ENCODE measurements at regions of chr20 and their contacts with region 1.

Region 1: GRCh38 chr20:43408848-43409576 is 48.7 kb upstream of the SRSF6 start:
- DNase-seq: no peak
- H3K4me3 ChIP-seq: no peak overlapping the region
- H3K27me3 ChIP-seq: no peaks in the 10 kb centered on the region
- CTCF ChIP-seq: peak; percentile 80

Region 2: DNA sequence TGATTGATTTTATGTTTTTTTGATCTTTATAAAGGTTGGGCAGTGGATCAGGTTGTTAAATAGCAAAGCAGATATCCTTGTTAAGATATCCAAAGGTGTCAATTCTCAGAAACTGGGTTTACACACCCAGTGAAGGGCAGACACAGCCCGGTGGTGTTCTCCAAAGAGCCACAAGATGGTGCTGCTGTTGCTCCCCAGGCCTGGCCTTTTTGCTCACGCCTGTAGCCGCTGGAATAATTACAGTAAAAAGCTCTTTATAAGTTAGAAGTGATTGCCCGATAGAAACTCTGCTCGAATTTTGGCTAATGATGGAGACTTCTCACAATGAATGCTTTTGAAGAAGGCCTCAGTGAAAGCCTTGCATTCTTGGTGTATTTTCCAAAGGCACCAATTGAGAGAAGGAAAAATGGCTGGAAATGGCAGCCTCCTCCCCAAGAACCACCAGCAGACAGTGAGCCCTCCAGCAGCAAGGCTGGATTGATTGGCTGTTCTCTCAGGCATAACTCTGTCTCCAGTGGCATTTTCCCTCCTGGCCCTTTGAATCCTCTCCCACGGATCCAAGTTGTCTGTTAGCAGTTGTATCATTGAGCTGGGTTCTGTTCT is 1670.3 kb before region 1 on chr20:
- CTCF ChIA-PET with region 1: interaction called, 29 read pairs
- POLR2A ChIA-PET with region 1: no interaction called
- DNase-seq: no peak
- H3K4me3 ChIP-seq: no peak overlapping the region
- H3K27me3 ChIP-seq: peaks cover 2% of the 10 kb centered on the region; the same call in 1 of the 2 replicates
- CTCF ChIP-seq: peak; percentile 93

Region 3: GRCh38 chr20:43187476-43188233 is 221.4 kb before region 1 on chr20:
- CTCF ChIA-PET with region 1: interaction called, 16 read pairs
- POLR2A ChIA-PET with region 1: no interaction called
- DNase-seq: peak; percentile 5
- H3K4me3 ChIP-seq: no peak overlapping the region
- H3K27me3 ChIP-seq: peaks cover 15% of the 10 kb centered on the region
- CTCF ChIP-seq: peak; percentile 93

Region 4: DNA sequence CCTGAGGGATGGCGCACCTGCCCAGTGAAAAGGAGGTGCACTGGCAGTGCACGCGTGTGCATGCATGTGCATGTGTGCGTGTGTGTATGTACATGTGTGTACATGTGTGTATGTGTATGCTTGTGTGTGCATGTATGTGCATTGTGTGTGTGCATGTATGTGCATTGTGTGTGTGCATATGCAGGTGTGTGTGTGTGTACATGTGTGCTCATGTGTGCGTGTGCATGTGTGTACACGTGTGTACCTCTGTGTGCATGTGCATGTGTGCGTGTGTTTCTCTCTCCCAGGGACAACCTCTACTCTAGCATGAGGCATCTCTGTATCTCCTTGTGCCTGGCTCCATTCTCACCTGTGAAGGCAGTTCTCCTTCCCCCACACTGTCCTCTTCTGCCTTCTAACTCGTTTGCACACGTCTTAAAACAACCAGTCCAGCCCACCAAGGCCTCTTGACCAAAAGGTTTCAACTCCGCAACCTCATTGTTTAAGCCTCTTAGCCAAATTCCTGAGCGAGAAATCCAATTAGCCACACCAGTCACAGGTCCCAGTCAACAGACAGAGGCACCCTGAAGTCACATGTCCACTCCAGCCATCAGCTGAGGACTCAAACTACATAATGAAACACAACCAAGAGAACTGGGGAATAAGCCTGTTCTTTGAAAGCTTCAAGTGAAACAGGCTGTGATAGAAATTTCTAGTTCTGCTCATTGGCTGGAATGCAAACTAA is 115.8 kb before region 1 on chr20:
- CTCF ChIA-PET with region 1: no interaction called
- POLR2A ChIA-PET with region 1: no interaction called
- DNase-seq: no peak
- H3K4me3 ChIP-seq: no peak overlapping the region
- H3K27me3 ChIP-seq: no peaks in the 10 kb centered on the region
- CTCF ChIP-seq: no peak

Region 5: GRCh38 chr20:43397147-43397546 is 11.9 kb before region 1 on chr20:
- CTCF ChIA-PET with region 1: interaction called, 28 read pairs
- POLR2A ChIA-PET with region 1: interaction called, 4 read pairs
- DNase-seq: no peak
- H3K4me3 ChIP-seq: no peak overlapping the region
- H3K27me3 ChIP-seq: no peaks in the 10 kb centered on the region
- CTCF ChIP-seq: no peak

Measured in BJ (cell line).